Activated CD4-positive, alpha-beta T cell treated with anti-CD3 and anti-CD28 coated beads, Interleukin-2, amount 10 ng/mL, durations not matched to agents 24 days and 14 days (primary cell): ENCODE measurements at regions of chr4 and their contacts with region 1.

Region 1: DNA sequence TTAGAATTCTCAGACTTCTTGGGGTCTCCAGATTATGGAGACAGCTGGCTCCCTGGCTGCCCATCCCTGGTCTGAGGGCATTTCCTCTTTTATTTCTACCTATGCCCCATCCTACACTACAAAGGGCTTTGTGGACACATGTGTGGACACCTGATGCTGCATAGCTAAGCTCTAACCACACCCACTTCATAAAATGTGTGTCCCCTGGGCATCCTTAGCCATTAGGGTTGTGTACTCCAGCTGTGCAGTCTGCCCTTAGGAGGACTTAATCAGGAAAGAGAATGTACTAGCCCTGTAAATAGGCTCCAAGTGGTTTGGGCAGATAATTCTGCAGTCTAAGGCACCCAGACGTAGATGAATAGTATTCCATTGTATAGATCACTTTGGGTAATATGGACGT is 47.0 kb downstream of the COQ2 start:
- DNase-seq: no peak
- H3K4me3 Mint-ChIP-seq: no peak overlapping the region
- H3K27ac Mint-ChIP-seq: no peak overlapping the region
- H3K4me1 Mint-ChIP-seq: peaks cover 51% of the 10 kb centered on the region
- H3K27me3 Mint-ChIP-seq: peaks cover 33% of the 10 kb centered on the region

Region 2: GRCh38 chr4:83252782-83253405 is 15.3 kb after region 1 on chr4:
- intact Hi-C with region 1: loop called (anchors 2 kb)
- DNase-seq: peak; percentile 93
- H3K4me3 Mint-ChIP-seq: no peak overlapping the region
- H3K27ac Mint-ChIP-seq: no peak overlapping the region
- H3K4me1 Mint-ChIP-seq: peaks cover 24% of the 10 kb centered on the region
- H3K27me3 Mint-ChIP-seq: no peaks in the 10 kb centered on the region

Region 3: DNA sequence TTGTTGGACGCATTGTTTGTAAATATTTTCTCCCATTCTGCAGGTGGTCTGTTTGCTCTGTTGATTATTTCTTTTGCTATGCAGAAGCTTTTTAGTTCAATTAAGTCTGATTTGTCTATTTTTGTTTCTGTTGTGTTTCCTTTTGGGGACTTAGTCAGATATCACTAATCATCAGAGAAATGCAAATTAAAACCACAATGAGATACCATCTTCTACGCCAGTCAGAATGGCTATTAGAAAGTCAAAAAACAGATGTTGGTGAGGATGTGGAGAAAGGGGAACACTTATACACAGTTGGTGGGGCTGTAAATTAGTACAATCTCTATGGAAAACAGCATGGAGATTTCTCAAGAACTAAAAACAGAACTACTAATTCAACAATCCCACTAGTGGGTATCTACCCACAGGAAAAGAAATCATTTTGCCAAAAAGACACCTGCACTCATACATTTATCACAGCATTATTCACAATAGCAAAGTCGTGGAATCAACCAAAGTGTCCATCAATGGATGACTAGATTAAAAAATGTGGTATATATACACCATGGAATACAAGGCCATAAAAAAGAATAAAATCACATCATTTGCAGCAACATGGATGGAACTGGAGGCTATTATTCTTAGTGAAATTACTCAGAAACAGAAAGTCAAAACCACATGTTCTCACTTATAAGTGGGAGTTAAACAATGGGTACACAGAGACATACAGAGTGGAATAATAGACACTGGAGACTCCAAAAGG is 38.9 kb after region 1 on chr4:
- intact Hi-C with region 1: loop called (anchors 1 kb)
- DNase-seq: no peak
- H3K4me3 Mint-ChIP-seq: peak overlapping the region; percentile 33
- H3K27ac Mint-ChIP-seq: peak overlapping the region; percentile 75
- H3K4me1 Mint-ChIP-seq: peaks cover 23% of the 10 kb centered on the region
- H3K27me3 Mint-ChIP-seq: no peaks in the 10 kb centered on the region